HepG2 (cell line): ENCODE measurements at regions of chr11 and their contacts with region 1.

Region 1: GRCh38 chr11:34890812-34891211 is 25.4 kb downstream of the APIP start:
- DNase-seq: peak; percentile 59
- ATAC-seq: no peak
- H3K4me3 ChIP-seq: no peak overlapping the region
- H3K27ac ChIP-seq: no peak overlapping the region
- H3K4me1 ChIP-seq: peaks cover 22% of the 10 kb centered on the region
- H3K27me3 ChIP-seq: no peaks in the 10 kb centered on the region
- CTCF ChIP-seq: peak; percentile 61
- EP300 ChIP-seq: no peak
- POLR2A ChIP-seq: no peak
- RAD21 ChIP-seq: peak; percentile 51; the same call in 1 of the 2 replicates

Region 2: GRCh38 chr11:34366522-34366921 is 524.3 kb before region 1 on chr11:
- CTCF ChIA-PET with region 1: no interaction called
- POLR2A ChIA-PET with region 1: no interaction called
- in situ Hi-C with region 1: loop called (anchors 10 kb)
- intact Hi-C with region 1: no loop called
- DNase-seq: peak; percentile 57
- ATAC-seq: no peak
- H3K4me3 ChIP-seq: no peak overlapping the region
- H3K27ac ChIP-seq: no peak overlapping the region
- H3K4me1 ChIP-seq: peaks cover 56% of the 10 kb centered on the region
- H3K27me3 ChIP-seq: no peaks in the 10 kb centered on the region
- CTCF ChIP-seq: peak; percentile 60
- EP300 ChIP-seq: no peak
- POLR2A ChIP-seq: no peak
- RAD21 ChIP-seq: 0 out of 2 replicates have a peak, but pooled peaks have one; percentile 21

Region 3: GRCh38 chr11:34512840-34513681 is 377.8 kb before region 1 on chr11:
- CTCF ChIA-PET with region 1: interaction called, 17 read pairs
- POLR2A ChIA-PET with region 1: no interaction called
- in situ Hi-C with region 1: loop called (anchors 5 kb)
- intact Hi-C with region 1: loop called (anchors 2 kb)
- DNase-seq: peak; percentile 69
- ATAC-seq: peak; percentile 96
- H3K4me3 ChIP-seq: peak overlapping the region; percentile 22 to 58 (median 32); a peak in 5 of 6 replicates
- H3K27ac ChIP-seq: no peak overlapping the region
- H3K4me1 ChIP-seq: peaks cover 49% of the 10 kb centered on the region
- H3K27me3 ChIP-seq: no peaks in the 10 kb centered on the region; a peak in 1 of 5 replicates
- CTCF ChIP-seq: peak; percentile 93
- EP300 ChIP-seq: peak in 1 of 2 experiments; percentile 33; a peak in 1 of 4 replicates
- POLR2A ChIP-seq: no peak
- RAD21 ChIP-seq: peak; percentile 74

Region 4: DNA sequence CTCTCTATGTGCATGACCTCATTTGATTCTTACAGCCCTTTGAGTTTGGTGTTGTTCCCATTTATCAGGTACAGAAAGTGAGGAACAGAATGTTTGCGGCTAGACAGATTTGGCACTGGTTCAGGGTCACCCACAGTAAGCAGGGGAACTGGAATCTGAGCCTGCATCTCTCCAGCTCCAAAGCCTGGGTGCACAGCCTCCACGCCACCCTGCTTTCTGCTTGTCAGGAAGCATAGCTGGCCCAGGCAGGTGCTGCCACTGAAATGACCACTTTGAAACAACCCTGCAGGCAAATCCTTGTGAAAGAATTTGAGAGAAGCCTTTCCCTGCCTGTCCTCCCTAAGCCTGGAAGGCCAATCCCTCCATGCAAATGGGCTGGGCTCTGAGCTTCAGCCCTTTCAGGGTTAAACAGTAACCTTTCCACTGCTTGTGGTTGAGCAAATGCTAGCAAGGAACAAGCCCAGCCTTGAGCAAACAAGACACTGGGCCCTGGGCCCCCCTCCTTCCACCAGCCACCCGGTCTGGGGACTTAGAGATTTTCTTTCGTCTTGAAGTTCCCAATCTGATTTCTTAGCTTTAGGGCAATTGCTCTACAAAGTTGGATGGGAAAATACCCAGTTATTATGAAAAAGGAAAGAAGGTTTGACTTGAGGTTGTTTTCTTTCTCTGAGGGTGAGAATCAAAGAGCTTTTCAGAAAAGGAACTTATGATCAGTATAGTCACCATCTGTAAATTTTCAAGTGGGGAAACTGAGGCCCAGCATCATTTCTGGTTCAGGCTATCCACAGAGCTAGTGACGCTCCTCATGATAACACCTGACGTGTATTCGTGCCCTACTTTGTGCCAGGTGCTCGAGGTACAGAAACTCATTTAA is 250.5 kb before region 1 on chr11:
- CTCF ChIA-PET with region 1: no interaction called
- POLR2A ChIA-PET with region 1: no interaction called
- in situ Hi-C with region 1: no loop called
- intact Hi-C with region 1: loop called (anchors 1 kb)
- DNase-seq: peak; percentile 94
- ATAC-seq: peak; percentile 98
- H3K4me3 ChIP-seq: peak overlapping the region in 1 of 3 experiments; percentile 47; a peak in 2 of 6 replicates
- H3K27ac ChIP-seq: peak overlapping the region; percentile 66
- H3K4me1 ChIP-seq: peaks cover 82% of the 10 kb centered on the region
- H3K27me3 ChIP-seq: no peaks in the 10 kb centered on the region
- CTCF ChIP-seq: peak; percentile 27; the same call in 1 of the 2 replicates
- EP300 ChIP-seq: peak in 1 of 2 experiments; percentile 81; a peak in 2 of 4 replicates
- POLR2A ChIP-seq: peak in 1 of 2 experiments; percentile 52; a peak in 2 of 4 replicates
- RAD21 ChIP-seq: peak; percentile 32; the same call in 1 of the 2 replicates

Region 5: DNA sequence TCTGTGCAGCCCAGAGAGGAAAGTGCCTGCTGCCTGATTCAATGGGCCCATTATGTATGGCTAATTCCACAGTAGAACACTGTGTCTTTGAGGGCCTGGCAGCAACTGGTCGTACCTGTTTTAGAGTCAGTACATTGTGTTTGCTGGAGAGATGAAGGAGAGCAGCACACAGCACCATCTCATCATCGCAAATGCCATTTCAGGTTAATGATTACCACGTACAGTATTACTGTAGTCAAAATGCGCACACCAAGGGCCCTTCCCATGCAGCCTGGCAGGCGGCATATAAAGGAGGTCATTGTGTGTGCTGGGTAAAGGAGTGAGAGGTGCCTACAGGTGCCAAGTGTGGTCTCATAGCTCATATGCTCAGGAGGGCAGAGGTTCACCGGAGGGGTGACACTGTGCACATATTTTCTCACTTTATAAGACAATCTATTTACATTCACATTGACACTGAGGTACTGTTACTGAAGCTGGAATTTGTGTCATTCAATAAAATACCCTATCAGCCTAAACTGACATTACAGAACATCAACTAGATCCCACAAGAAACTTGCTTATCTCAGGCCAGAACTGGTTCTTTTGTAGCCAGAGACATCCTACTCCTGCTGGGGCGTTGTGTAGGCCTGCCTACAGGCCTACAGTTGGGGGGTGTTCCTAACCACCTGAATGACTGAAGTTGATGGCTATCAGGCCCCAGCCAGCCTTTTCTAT is 65.0 kb before region 1 on chr11:
- CTCF ChIA-PET with region 1: no interaction called
- POLR2A ChIA-PET with region 1: no interaction called
- in situ Hi-C with region 1: no loop called
- intact Hi-C with region 1: loop called (anchors 5 kb)
- DNase-seq: peak; percentile 99
- ATAC-seq: peak; percentile 96
- H3K4me3 ChIP-seq: peak overlapping the region in 2 of 3 experiments; percentile 15 to 38; a peak in 2 of 6 replicates
- H3K27ac ChIP-seq: peak overlapping the region; percentile 92
- H3K4me1 ChIP-seq: peaks cover 62% of the 10 kb centered on the region
- H3K27me3 ChIP-seq: no peaks in the 10 kb centered on the region
- CTCF ChIP-seq: no peak
- EP300 ChIP-seq: peak; percentile 36 to 73; a peak in 2 of 4 replicates
- POLR2A ChIP-seq: peak; percentile 33 to 70; a peak in 2 of 4 replicates
- RAD21 ChIP-seq: peak; percentile 8; the same call in 1 of the 2 replicates

Region 6: DNA sequence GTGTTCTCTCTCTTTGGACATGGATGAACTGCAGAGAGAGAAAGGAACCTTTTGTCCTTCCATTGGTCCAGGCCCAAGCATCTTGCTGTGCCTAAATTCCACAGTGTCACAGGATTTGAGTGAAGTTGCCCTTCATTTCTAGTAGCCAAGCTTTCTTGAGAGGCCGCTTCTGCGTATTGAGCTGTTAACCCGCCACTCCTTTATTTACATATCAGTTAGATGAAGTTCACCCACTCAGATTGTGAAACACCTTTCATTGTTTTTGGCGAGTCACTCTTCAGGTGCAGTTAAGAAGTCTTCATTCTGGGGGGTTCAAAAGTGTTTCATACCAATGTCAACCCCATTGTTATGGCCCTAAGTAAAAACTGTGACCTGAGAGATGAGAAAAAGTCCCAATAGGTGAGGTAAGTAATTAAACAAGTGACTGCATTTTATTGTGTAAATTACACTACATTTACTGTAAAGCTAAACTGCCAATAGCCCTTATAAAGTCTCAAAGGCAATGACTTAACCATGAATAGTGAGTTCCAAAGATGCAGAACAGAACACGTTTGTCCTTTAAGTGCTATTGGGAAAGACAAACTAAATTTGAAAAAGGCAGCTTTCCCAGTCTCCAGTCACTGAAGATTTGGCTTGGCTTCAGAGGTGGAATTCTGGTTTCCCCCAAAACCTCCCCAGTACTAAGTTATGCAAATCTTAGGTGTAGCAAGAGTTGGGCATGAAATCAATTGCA is 35.6 kb before region 1 on chr11:
- CTCF ChIA-PET with region 1: no interaction called
- POLR2A ChIA-PET with region 1: no interaction called
- in situ Hi-C with region 1: no loop called
- intact Hi-C with region 1: no loop called
- DNase-seq: no peak
- ATAC-seq: no peak
- H3K4me3 ChIP-seq: no peak overlapping the region
- H3K27ac ChIP-seq: no peak overlapping the region
- H3K4me1 ChIP-seq: peaks cover 22% of the 10 kb centered on the region
- H3K27me3 ChIP-seq: no peaks in the 10 kb centered on the region
- CTCF ChIP-seq: no peak
- EP300 ChIP-seq: no peak
- POLR2A ChIP-seq: no peak
- RAD21 ChIP-seq: no peak